PC-9 (cell line): ENCODE measurements at regions of chr11 and their contacts with region 1.

Region 1: GRCh38 chr11:19903620-19904069 is 191.0 kb downstream of the NAV2 start:
- DNase-seq: peak in 1 of 2 experiments; percentile 72
- H3K4me3 ChIP-seq: no peak overlapping the region
- H3K27ac ChIP-seq: no peak overlapping the region
- H3K4me1 ChIP-seq: no peaks in the 10 kb centered on the region
- H3K27me3 ChIP-seq: no peaks in the 10 kb centered on the region
- CTCF ChIP-seq: peak; percentile 91

Region 2: GRCh38 chr11:19326499-19326898 is 577.1 kb before region 1 on chr11:
- CTCF ChIA-PET with region 1: no interaction called
- POLR2A ChIA-PET with region 1: no interaction called
- intact Hi-C with region 1: loop called (anchors 10 kb)
- DNase-seq: peak in 1 of 2 experiments; percentile 59
- H3K4me3 ChIP-seq: no peak overlapping the region
- H3K27ac ChIP-seq: no peak overlapping the region
- H3K4me1 ChIP-seq: 0 out of 2 replicates have a peak, but pooled peaks cover 10% of the 10 kb centered on the region
- H3K27me3 ChIP-seq: no peaks in the 10 kb centered on the region
- CTCF ChIP-seq: peak; percentile 69

Region 3: GRCh38 chr11:19539861-19540260 is 363.8 kb before region 1 on chr11:
- CTCF ChIA-PET with region 1: no interaction called
- POLR2A ChIA-PET with region 1: no interaction called
- intact Hi-C with region 1: no loop called
- DNase-seq: no peak
- H3K4me3 ChIP-seq: no peak overlapping the region
- H3K27ac ChIP-seq: no peak overlapping the region
- H3K4me1 ChIP-seq: no peaks in the 10 kb centered on the region
- H3K27me3 ChIP-seq: no peaks in the 10 kb centered on the region
- CTCF ChIP-seq: no peak

Region 4: DNA sequence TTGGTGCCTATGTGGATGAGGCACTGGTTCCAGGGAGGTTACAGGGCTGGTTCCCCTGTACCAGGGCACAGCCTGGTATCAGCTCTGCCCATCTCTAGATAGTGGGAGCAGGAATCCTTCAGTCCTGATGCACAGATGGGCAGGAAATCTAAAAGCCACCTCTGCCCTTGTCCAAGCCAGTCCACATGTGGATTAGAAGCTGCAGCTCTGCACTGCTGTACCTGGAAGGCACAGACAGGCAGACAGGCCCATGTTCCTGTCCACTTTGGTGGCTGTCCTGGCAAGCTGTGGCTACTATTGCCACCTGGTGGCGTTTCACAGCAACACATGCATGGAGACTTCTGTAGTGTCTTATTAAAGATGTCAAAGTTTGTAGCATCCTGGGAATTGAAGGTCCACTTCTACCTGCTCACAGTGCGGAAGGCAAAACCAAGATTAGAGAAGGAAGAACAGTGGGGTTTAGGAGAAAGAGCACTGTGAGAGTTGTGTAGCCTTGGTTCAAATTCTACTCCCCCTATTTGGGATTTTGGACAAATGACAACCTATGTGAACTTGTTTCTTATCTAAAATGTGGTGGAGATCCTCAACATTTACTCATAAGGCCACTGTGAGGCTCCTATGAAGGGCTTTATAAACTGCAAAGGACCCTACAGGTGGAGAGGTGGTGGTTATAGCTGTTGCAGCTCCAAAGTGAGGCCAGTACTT is 160.9 kb before region 1 on chr11:
- CTCF ChIA-PET with region 1: interaction called, 9 read pairs
- POLR2A ChIA-PET with region 1: interaction called, 9 read pairs
- intact Hi-C with region 1: loop called (anchors 1 kb)
- DNase-seq: peak; percentile 61 to 79
- H3K4me3 ChIP-seq: no peak overlapping the region
- H3K27ac ChIP-seq: no peak overlapping the region
- H3K4me1 ChIP-seq: peaks cover 6% of the 10 kb centered on the region; the same call in 1 of the 2 replicates
- H3K27me3 ChIP-seq: no peaks in the 10 kb centered on the region
- CTCF ChIP-seq: peak; percentile 94

Region 5: GRCh38 chr11:19938169-19938856 is 34.7 kb after region 1 on chr11:
- CTCF ChIA-PET with region 1: interaction called, 7 read pairs
- POLR2A ChIA-PET with region 1: no interaction called
- intact Hi-C with region 1: loop called (anchors 1 kb)
- DNase-seq: peak in 1 of 2 experiments; percentile 45
- H3K4me3 ChIP-seq: no peak overlapping the region
- H3K27ac ChIP-seq: peak overlapping the region; percentile 56
- H3K4me1 ChIP-seq: peaks cover 29% of the 10 kb centered on the region
- H3K27me3 ChIP-seq: no peaks in the 10 kb centered on the region
- CTCF ChIP-seq: peak; percentile 85

Region 6: DNA sequence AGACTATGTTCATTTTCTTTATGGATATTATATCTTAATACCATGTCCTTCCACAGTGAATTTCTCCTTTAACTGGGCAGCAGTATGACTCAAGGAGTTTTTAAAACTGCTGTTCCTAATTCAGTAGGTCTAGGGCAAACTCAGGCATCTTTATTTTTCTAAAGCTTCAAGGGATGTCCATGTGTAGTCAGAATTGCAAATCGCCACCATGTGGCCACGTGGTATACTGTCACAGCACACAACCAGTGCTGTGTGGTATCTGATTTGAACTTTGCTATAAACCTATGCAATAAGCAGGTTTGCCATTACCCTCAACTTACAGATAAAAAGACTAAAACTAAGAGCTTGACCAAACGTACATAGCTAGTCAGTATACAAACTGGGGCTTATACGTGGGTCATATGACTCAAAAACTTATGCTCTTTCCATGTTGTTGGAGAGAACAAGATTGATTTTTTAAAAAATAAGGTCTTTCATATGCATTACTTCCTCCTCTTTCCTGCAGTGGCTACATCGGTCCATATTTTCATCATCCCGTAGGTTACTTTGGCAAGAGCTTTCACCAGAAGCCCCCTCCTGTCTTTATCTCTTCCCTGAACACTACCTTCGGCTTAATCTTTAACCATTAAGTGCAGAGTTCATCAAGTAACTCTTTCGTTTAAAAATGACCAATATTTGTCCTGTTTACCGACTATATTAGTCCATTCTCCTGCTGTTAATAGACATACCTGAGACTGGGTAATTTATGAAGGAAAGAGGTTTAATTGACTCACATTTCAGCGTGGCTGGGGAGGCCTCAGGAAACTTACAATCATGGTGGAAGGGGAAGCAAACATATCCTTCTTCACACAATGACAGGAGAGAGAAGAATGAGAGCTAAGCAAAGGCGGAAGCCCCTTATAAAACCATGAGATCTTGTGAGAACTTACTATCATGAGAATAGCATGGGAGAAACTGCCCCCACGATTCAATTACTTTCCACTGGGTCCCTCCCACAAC is 451.9 kb after region 1 on chr11:
- CTCF ChIA-PET with region 1: interaction called, 4 read pairs
- POLR2A ChIA-PET with region 1: no interaction called
- intact Hi-C with region 1: loop called (anchors 2 kb)
- DNase-seq: peak in 1 of 2 experiments; percentile 46
- H3K4me3 ChIP-seq: no peak overlapping the region
- H3K27ac ChIP-seq: no peak overlapping the region
- H3K4me1 ChIP-seq: no peaks in the 10 kb centered on the region; the same call in 1 of the 2 replicates
- H3K27me3 ChIP-seq: no peaks in the 10 kb centered on the region
- CTCF ChIP-seq: peak; percentile 74